ENCODE measurements at regions of chr1 and their contacts with region 1.

Region 1: DNA sequence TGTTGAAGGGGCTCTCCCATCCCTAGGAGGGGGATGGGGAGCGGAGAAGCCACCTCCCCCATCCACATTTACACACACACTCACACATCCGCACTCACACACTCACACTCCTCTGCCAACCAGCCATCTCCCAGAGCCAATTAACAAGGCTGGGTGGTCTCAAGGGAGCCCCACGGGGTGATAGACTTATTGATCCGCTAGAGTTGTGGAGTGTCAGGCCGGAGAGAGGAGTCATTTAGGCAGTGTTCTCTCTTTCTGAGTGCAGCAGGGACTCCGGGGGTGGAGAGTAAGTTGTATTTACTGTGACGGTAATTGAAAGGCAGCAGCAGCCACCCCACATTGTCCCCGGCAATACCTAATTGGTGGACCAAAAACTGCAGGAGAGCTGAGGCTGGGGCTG is 61.6 kb downstream of the KLHDC7A start:
- DNase-seq: no peak
- ATAC-seq: no peak
- H3K4me3 ChIP-seq: no peak overlapping the region
- H3K27ac ChIP-seq: no peak overlapping the region
- H3K4me1 ChIP-seq: no peaks in the 10 kb centered on the region
- H3K27me3 ChIP-seq: peaks cover 0 to 90% (median 77%) of the 10 kb centered on the region in 7 donors
- CTCF ChIP-seq: no peak

Region 2: GRCh38 chr1:17790383-17791054 is 751.8 kb before region 1 on chr1:
- intact Hi-C with region 1: loop called in 1 of 10 experiments (anchors 5 kb)
- DNase-seq: no peak
- ATAC-seq: no peak
- H3K4me3 ChIP-seq: no peak overlapping the region
- H3K27ac ChIP-seq: no peak overlapping the region
- H3K4me1 ChIP-seq: peaks cover 0 to 5% (median 0%) of the 10 kb centered on the region in 9 donors
- H3K27me3 ChIP-seq: peaks cover 0 to 31% (median 7%) of the 10 kb centered on the region in 7 donors
- CTCF ChIP-seq: no peak